ENCODE measurements at regions of chr1 and their contacts with region 1.

Region 1: DNA sequence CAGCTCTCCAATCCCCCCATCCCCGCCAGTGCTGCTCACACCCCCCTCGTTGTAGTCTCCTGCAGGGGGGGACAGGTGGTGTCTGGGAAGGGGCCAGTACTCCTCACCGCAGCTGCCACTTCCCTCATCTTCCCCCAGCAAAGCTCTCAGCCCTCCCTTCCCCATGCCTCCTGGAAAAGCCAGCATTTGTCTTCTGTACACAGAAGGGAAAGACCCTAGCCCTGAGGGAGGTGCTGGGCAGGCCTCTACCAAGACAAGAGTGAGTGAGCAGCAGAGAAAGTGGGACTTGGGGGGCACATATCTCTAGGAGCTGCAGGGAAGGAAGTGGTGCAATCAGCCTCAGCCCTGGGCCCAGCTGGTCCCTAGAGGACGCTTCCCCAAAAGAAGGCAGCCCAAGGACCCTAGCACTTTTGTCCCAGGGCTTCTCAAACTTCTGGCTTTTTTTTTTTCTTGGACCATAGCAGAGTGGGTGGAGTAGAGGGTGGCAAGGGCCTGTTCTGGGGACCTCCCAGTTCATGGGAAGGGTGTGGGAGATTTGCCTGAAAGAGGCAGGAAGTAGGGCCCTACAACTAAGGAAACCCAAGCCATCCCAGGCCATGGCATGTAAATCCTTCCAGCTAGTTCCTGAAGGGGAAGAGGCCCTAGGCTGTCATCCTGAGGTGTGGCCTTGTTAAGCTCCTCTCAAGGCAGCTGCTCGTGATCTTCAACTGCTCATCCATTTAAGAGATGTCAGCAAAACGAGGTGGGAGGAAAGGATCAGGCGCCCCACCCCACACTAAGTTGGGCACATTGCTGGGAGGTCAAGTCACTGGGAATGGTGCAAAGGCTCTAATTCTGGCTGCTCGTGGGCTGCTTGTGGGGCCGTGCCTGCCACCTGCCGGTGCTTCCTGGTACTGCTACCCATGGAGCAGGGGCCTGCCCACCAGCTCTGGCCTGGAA is 12.6 kb downstream of the ZC3H12A start:
- DNase-seq: peak; percentile 79
- CTCF ChIP-seq: peak; percentile 93

Region 2: GRCh38 chr1:37449936-37450335 is 37.0 kb before region 1 on chr1:
- CTCF ChIA-PET with region 1: interaction called, 209 read pairs
- POLR2A ChIA-PET with region 1: no interaction called
- DNase-seq: no peak
- CTCF ChIP-seq: no peak

Region 3: GRCh38 chr1:37465593-37466517 is 21.1 kb before region 1 on chr1:
- CTCF ChIA-PET with region 1: interaction called, 209 read pairs
- POLR2A ChIA-PET with region 1: no interaction called
- DNase-seq: no peak
- CTCF ChIP-seq: no peak

Region 4: DNA sequence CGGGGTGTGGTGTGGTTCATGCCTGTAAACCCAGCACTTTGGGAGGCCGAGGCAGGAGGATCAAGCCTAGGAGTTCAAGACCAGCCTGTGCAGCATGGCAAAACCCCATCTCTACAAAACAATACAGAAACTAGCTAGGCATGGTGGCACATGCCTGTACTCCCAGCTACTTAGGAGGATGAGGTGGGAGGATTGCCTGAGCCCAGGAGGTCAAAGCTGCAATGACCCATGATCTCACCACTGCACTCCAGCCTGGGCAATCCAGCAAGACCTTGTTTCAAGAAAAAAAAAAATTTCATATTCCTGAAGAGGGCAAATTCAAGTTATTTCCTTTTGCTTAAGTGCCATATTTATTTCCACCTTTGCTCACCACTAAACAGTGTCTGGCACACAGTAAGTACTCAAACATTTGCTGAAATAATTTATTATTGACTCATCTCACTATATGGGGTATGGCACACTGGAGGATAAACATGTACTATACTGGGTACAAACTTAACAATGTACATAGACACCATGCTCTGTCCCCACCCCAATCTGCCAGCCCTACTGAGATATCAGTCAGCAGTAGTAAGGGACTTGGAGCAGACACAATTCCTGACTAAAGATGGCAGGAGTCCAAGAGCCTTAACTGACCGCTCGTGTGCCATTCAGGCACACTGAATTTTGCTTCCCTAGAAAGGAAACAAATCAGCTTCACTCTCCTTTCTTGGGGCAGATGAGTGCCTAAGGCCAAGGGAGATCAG is 12.1 kb after region 1 on chr1:
- CTCF ChIA-PET with region 1: interaction called, 104 read pairs
- POLR2A ChIA-PET with region 1: interaction called, 6 read pairs
- DNase-seq: no peak
- CTCF ChIP-seq: no peak

Region 5: GRCh38 chr1:37514350-37515184 is 27.6 kb after region 1 on chr1 and contains the start of gene MEAF6:
- CTCF ChIA-PET with region 1: interaction called, 38 read pairs
- POLR2A ChIA-PET with region 1: no interaction called
- DNase-seq: peak; percentile 94
- CTCF ChIP-seq: peak; percentile 64